ENCODE measurements at regions of chr12 and their contacts with region 1.

Region 1: DNA sequence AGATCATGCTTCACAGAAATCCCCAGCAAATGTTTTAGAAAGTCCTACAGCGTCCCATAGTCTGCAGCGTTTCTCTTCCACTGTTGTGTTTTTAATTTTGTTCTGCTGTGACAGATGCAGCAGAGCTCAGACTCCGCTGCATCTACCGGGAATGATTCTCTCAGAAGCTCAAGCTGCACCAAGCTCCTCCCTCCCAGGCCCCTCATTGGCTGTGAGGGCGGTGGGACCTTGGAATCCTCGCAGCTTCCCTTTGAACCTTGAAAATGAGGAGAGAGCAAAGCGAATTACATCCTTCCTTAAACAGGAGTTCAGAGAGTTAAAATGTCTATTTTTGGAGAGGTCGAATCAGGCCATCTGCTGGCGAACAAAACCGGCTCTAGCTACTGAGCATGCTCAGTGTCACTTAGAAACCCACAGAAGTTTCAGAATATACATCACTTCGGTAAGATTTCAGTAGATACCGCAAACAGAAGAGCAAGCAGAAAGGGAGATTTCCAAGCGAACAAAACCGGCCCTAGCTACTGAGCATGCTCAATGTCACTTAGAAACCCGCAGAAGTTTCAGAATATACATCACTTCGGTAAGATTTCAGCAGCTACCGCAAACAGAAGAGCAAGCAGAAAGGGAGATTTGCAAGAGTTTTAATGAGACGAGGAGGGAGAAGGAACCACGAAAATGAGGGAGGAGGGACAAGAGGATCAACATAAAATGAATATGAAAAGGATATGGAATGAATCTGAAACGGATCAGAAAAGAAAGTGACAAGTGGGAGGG is at the start of gene ABCD2:
- DNase-seq: peak; percentile 85
- H3K4me3 Mint-ChIP-seq: no peak within 1 kb of the TSS
- H3K27ac Mint-ChIP-seq: no peak within 1 kb of the TSS
- H3K4me1 Mint-ChIP-seq: peaks cover 32% of the 10 kb centered on the region
- H3K27me3 Mint-ChIP-seq: no peaks in the 10 kb centered on the region
- total RNA-seq, gene ABCD2: 4.8 to 5.0 TPM

Region 2: DNA sequence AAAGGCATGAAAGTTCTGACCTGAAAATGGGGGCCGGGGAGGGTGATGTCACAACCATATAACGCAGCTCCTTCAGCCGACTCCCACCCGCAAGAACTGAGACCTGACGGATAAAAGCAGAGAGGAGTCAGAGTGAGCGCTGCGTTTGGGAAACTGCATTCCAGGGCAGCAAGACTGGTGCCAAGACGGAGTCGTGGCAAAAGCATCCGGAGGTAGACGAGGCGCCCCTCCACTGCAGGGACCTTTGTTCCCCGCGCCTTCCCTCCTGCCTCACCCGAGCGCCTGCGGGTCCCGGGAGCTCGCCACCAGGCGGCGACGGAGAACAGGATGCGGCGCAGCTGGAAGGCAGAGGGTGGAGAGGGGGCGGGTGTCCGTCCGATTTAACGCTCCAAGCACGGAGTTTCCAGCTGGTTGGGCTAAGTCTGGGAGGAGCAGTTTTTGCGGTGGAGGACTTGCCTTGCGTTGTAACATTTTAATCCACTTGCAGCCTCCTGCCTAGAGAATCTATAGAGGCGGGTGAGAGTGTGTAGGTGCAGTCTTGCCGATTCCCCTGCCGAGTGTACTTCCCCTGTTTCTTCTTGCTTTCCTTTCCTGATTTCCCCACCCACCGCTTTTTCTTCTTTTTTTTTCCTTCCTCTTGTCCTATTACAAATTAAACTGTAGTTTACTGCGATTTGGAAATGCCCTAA is 713.2 kb before region 1 on chr12:
- CTCF ChIA-PET with region 1: no interaction called
- POLR2A ChIA-PET with region 1: interaction called, 4 read pairs
- intact Hi-C with region 1: loop called (anchors 10 kb)
- DNase-seq: peak; percentile 80
- H3K4me3 Mint-ChIP-seq: peak overlapping the region; percentile 82
- H3K27ac Mint-ChIP-seq: peak overlapping the region; percentile 89
- H3K4me1 Mint-ChIP-seq: peaks cover 18% of the 10 kb centered on the region
- H3K27me3 Mint-ChIP-seq: peaks cover 20% of the 10 kb centered on the region

Region 3: GRCh38 chr12:39331539-39332261 is 288.1 kb before region 1 on chr12:
- CTCF ChIA-PET with region 1: no interaction called
- POLR2A ChIA-PET with region 1: no interaction called
- intact Hi-C with region 1: loop called (anchors 5 kb)
- DNase-seq: no peak
- H3K4me3 Mint-ChIP-seq: no peak overlapping the region
- H3K27ac Mint-ChIP-seq: no peak overlapping the region
- H3K4me1 Mint-ChIP-seq: peaks cover 18% of the 10 kb centered on the region
- H3K27me3 Mint-ChIP-seq: no peaks in the 10 kb centered on the region

Region 4: GRCh38 chr12:39402922-39403321 is 216.9 kb before region 1 on chr12:
- CTCF ChIA-PET with region 1: no interaction called
- POLR2A ChIA-PET with region 1: no interaction called
- intact Hi-C with region 1: loop called (anchors 5 kb)
- DNase-seq: no peak
- H3K4me3 Mint-ChIP-seq: no peak overlapping the region
- H3K27ac Mint-ChIP-seq: no peak overlapping the region
- H3K4me1 Mint-ChIP-seq: peaks cover 25% of the 10 kb centered on the region
- H3K27me3 Mint-ChIP-seq: no peaks in the 10 kb centered on the region

Region 5: GRCh38 chr12:39467432-39467870 is 152.4 kb before region 1 on chr12:
- CTCF ChIA-PET with region 1: no interaction called
- POLR2A ChIA-PET with region 1: no interaction called
- intact Hi-C with region 1: loop called (anchors 1 kb)
- DNase-seq: peak; percentile 13
- H3K4me3 Mint-ChIP-seq: no peak overlapping the region
- H3K27ac Mint-ChIP-seq: peak overlapping the region; percentile 39
- H3K4me1 Mint-ChIP-seq: peaks cover 16% of the 10 kb centered on the region
- H3K27me3 Mint-ChIP-seq: peaks cover 2% of the 10 kb centered on the region

Region 6: DNA sequence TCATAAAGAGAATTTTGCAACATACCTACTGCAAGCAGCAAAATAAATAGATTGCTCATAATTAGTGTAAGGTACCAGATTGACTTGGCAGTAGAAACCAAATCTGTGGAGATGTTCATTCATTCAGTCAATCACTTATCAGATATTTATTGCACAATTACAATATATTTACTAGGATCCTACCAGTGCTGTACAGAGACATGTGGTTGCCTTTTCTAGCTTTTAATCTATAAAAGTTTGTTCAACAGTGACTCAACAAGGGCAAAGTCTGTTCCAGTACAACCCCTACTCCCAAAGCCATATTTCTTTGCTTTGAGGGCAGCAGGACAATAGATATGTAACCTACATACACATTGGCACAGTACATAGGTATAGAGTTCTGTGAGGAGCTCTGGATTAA is 27.6 kb before region 1 on chr12:
- CTCF ChIA-PET with region 1: interaction called, 9 read pairs
- POLR2A ChIA-PET with region 1: interaction called, 3 read pairs
- intact Hi-C with region 1: loop called (anchors 2 kb)
- DNase-seq: no peak
- H3K4me3 Mint-ChIP-seq: no peak overlapping the region
- H3K27ac Mint-ChIP-seq: no peak overlapping the region
- H3K4me1 Mint-ChIP-seq: peaks cover 18% of the 10 kb centered on the region
- H3K27me3 Mint-ChIP-seq: no peaks in the 10 kb centered on the region

Region 7: DNA sequence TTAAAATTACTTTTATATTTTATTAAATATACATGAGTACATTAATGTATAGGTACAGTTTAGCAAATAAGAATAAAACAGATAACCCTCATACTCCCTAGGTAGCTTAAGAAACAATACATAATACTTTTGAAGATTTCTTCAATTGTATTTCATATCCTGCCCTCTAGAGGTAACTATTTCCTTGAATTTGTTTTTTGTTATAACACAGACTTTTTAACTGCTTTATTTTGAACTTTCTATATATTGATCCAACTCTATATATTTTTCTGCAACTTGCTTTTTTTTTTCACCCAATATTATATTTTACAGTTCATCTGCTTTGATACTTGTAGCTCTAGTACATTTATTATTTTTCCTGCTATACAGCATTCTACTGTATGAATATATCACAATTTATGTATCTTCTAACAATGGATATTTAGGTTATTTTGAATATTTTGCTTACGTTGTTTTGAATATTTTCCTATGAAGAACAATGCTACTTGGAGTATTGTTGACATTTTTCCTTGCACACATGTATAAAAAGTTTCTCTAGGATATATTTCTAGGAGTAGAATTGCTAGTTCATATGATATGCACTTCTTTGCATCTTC is 72.5 kb after region 1 on chr12:
- CTCF ChIA-PET with region 1: interaction called, 7 read pairs
- POLR2A ChIA-PET with region 1: no interaction called
- intact Hi-C with region 1: loop called (anchors 1 kb)
- DNase-seq: no peak
- H3K4me3 Mint-ChIP-seq: no peak overlapping the region
- H3K27ac Mint-ChIP-seq: no peak overlapping the region
- H3K4me1 Mint-ChIP-seq: peaks cover under 1% of the 10 kb centered on the region
- H3K27me3 Mint-ChIP-seq: no peaks in the 10 kb centered on the region

Measured in activated CD4-positive, alpha-beta memory T cell treated with anti-CD3 and anti-CD28 coated beads for 36 hours (primary cell).